ENCODE measurements at regions of chr14 and their contacts with region 1.

Region 1: GRCh38 chr14:75307700-75308379 is 29.2 kb downstream of the FOS start:
- DNase-seq: peak; percentile 87
- ATAC-seq: peak; percentile 54

Region 2: GRCh38 chr14:75132382-75133086 is 175.3 kb before region 1 on chr14:
- intact Hi-C with region 1: loop called (anchors 2 kb)
- DNase-seq: no peak
- ATAC-seq: peak; percentile 77

Region 3: DNA sequence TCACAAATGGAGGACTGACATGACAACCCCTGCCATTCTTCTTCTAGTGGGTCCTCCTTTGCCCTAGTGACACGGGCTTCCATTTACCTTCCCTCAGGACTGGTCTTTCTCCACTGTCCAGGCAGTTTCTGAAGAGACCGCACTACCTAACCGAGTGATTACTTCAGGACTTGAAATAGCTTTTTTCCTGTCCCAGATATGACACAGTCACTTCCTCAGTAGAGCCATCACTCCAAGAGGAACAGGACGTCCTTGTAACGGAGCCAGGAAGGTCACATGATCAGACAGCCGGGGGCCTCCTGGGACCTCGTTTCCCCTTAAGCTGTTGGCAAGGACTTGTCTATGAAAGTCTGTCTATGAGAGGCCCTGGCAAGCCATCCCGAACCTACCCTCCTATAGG is 33.1 kb after region 1 on chr14:
- intact Hi-C with region 1: loop called (anchors 2 kb)
- DNase-seq: peak; percentile 90
- ATAC-seq: peak; percentile 93

Region 4: GRCh38 chr14:75427482-75428229 is 119.8 kb after region 1 on chr14 and contains the start of gene JDP2:
- intact Hi-C with region 1: loop called (anchors 1 kb)
- DNase-seq: peak; percentile 98
- ATAC-seq: peak; percentile 93
- total RNA-seq, gene JDP2: 27.2 TPM

Region 5: GRCh38 chr14:75487155-75487671 is 179.4 kb after region 1 on chr14:
- intact Hi-C with region 1: loop called (anchors 1 kb)
- DNase-seq: no peak
- ATAC-seq: no peak

Region 6: GRCh38 chr14:75560962-75561432 is 253.2 kb after region 1 on chr14:
- intact Hi-C with region 1: loop called (anchors 2 kb)
- DNase-seq: peak; percentile 83
- ATAC-seq: peak; percentile 83

Region 7: GRCh38 chr14:75654127-75654732 is 346.4 kb after region 1 on chr14:
- intact Hi-C with region 1: loop called (anchors 10 kb)
- DNase-seq: peak; percentile 83
- ATAC-seq: peak; percentile 87

Measured in Right ventricle myocardium inferior (tissue), 1 donor.